ENCODE measurements at regions of chr3 and their contacts with region 1.

Region 1: DNA sequence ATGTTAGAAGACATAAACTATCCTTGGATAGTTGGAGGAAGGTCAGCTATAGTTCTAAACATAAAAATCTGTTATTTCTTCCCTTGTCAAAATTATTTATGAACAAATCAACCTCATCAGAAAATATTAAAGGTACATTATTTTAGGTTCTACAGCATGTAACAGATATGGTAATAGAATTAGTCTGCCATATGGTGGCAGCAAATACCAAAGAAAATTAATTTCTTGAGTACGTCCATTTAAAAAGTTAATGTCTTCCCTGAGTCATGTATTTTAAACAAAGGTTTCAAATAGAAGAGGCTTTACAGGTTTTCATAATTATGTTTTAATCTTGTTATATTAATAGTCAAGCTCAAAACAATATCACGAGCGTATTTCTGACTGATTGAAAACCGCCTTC is 17.9 kb upstream of the ANKRD28 start:
- DNase-seq: no peak

Region 2: GRCh38 chr3:15458212-15458780 is 357.4 kb before region 1 on chr3:
- intact Hi-C with region 1: no loop called
- DNase-seq: no peak

Region 3: DNA sequence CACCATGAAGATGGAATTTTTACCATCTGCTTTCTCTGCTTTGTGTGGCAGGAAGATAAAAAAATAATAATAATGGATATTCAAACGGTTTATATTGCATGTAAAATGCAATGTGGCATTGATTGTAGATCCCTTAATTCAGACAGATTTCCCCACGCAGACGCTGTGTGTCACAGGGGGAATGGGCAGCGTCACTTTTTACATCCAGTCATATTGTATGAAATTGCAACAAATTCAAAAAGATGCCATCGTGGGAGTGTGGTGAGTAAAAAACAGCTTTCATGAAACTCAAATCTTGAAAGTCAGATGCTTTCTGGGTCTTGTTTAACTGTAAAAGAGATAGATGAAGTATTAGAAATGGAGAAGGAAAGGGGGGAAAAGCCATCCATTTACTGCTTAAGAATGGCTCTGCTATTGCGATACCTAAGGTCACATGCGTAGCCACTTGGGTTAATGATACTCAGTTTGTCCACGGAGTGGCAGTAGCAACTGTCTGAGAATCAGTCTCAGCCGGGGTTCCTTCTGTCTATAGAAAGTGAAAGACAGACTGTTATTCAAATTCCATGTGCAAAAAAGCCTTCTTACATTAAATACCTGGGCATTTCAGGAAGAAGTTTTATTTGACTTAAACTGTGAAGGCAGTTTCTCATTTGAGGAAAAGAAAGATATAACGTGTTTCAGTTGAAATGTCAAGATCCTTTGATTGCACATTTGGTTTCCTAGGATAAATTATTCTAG is 185.7 kb before region 1 on chr3:
- intact Hi-C with region 1: loop called (anchors 1 kb)
- DNase-seq: peak in 6 of 10 donors; percentile 39 to 92 (median 66)

Region 4: DNA sequence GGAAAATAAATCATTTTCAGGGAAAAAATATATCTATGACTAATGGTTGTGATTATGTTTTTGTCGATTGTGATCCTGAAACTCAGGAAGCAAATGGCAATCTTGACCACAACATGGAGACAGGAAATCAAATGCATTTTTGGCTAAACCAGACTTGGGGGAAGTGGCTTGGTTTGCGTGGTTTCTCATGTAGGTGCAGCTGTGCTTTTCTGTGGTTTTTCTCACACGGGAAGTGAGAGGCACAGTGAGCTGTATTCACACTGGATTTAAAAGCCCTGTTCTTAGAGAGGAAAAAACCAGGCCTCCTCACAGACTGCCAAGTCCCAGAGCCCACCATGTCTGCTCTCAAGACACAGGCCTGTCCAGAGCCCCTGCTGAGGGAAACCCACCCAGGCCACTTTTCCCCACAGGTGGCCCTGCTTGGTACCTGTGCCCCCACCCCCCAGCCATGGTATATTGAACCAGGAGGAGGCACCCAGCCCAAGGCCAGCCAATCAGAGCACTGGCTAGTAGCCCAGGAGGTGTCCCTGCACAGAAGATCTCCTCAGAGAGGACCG is 168.0 kb before region 1 on chr3:
- intact Hi-C with region 1: loop called (anchors 5 kb)
- DNase-seq: no peak

Region 5: DNA sequence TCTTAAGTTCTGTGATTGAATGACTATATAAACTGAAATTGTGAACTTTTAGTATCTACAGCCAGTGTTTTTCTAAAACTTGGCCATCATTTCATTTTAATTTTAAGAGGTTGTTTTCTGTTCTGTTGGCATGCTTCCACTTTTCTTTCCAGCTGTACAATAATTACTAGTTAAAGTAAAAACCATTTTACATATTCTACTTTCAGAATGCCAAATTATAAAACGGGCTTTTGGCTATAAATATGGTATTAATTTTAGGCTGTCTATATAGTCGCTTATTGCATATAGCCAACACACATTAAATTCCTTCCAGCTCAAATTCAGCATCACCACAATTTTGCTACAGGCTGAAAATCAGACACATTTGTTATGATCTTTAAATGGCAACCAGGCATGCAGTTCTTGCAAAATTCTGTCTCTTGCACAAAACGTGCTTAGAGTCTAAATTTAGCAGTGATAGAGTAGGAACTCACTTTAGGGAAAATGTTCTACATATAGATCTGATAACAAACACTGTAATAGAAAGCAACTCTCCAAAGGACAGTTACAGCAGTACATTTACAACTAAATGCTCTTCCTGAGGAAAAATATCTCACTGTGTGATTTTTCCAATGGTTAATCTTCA is 133.0 kb before region 1 on chr3:
- intact Hi-C with region 1: no loop called
- DNase-seq: no peak

Region 6: GRCh38 chr3:15859507-15860013 is 43.9 kb after region 1 on chr3:
- intact Hi-C with region 1: loop called (anchors 5 kb)
- DNase-seq: peak; percentile 75 to 98 (median 88)

Region 7: GRCh38 chr3:16028604-16029003 is 212.9 kb after region 1 on chr3:
- intact Hi-C with region 1: no loop called
- DNase-seq: no peak

Region 8: DNA sequence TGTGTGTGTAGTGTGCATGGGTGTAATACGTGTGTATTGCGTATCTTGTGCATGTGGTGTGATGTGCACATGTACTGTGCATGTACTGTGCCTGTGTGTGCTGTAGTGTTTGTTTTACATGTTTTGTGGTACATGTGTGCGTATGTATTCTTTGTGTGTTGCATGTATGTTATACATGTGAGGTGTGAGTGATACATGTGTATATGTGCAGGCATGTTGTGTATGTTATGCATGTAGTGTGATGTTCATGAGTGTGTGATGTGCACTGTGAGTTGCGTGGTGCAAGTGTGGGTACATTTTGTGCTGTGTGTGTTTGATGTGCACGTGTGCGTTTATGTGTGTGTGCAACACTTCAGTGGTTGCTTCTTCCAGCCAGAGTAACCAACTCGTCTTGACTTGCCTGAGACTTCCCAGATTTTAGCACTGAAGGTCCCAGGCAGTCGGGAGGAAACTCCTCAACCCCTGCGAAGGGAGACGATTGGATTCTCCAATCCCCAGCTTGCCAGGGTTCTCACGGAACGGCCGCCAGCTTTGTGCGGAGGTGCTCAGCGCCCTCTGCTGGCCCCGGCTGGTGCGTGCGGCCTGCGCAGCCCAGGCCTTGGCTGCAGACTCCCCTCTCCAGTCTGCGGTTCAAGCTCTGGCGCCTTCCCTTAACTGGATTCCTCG is 362.4 kb after region 1 on chr3:
- intact Hi-C with region 1: loop called (anchors 5 kb)
- DNase-seq: peak; percentile 83 to 98 (median 88)

Region 9: GRCh38 chr3:16247276-16248061 is 431.8 kb after region 1 on chr3:
- intact Hi-C with region 1: loop called (anchors 2 kb)
- DNase-seq: peak; percentile 54 to 97 (median 84)